Activated CD4-positive, alpha-beta memory T cell treated with anti-CD3 and anti-CD28 coated beads for 36 hours (primary cell): ENCODE measurements at regions of chr6 and their contacts with region 1.

Region 1: GRCh38 chr6:147106759-147107401 is 97.3 kb upstream of the STXBP5 start:
- DNase-seq: no peak
- H3K4me3 Mint-ChIP-seq: no peak overlapping the region
- H3K27ac Mint-ChIP-seq: no peak overlapping the region
- H3K4me1 Mint-ChIP-seq: peaks cover 38% of the 10 kb centered on the region
- H3K27me3 Mint-ChIP-seq: no peaks in the 10 kb centered on the region

Region 2: GRCh38 chr6:146693342-146693741 is 413.5 kb before region 1 on chr6:
- CTCF ChIA-PET with region 1: no interaction called
- POLR2A ChIA-PET with region 1: no interaction called
- intact Hi-C with region 1: loop called (anchors 5 kb)
- DNase-seq: no peak
- H3K4me3 Mint-ChIP-seq: no peak overlapping the region
- H3K27ac Mint-ChIP-seq: no peak overlapping the region
- H3K4me1 Mint-ChIP-seq: no peaks in the 10 kb centered on the region
- H3K27me3 Mint-ChIP-seq: no peaks in the 10 kb centered on the region